ENCODE measurements at regions of chr1 and their contacts with region 1.

Region 1: GRCh38 chr1:12016182-12016581 is 3.1 kb upstream of the MIIP start:
- DNase-seq: no peak
- H3K4me3 ChIP-seq: no peak overlapping the region
- H3K27ac ChIP-seq: no peak overlapping the region
- H3K4me1 ChIP-seq: no peaks in the 10 kb centered on the region
- H3K27me3 ChIP-seq: no peaks in the 10 kb centered on the region
- CTCF ChIP-seq: no peak

Region 2: DNA sequence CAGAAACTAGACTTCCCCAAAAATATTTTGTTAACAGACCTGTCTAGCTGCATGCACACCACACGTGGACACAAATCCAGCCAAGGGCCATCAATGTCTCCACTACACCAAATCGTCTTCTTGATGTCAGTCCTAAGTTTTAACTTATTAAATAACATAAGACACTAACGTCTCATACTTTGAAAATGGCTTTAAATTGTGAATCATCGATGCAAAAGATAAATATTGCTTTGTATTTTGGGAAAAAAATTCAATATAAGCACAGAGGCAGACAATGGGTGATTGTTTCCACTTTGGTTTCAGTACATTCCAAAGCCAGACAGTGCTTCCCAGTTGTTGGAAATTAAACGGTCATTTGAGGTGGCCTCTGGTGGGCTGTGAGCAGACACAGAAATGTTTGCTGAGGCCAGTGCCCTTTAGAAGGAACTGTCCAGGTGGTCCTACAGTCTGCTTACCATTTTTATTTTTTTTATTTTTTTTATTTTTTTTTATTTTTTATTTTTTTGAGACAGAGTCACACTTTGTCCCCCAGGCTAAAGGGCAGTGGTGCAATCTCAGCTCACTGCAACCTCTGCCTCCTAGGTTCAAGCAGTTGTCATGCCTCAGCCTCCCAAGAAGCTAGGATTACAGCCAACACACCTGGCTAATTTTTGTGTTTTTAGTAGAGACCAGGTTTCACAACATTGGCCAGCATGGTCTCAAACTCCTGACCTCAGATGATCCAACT is 88.2 kb before region 1 on chr1:
- CTCF ChIA-PET with region 1: no interaction called
- POLR2A ChIA-PET with region 1: interaction called, 10 read pairs
- intact Hi-C with region 1: no loop called
- DNase-seq: no peak
- H3K4me3 ChIP-seq: no peak overlapping the region
- H3K27ac ChIP-seq: no peak overlapping the region
- H3K4me1 ChIP-seq: peaks cover 27% of the 10 kb centered on the region
- H3K27me3 ChIP-seq: no peaks in the 10 kb centered on the region
- CTCF ChIP-seq: no peak

Region 3: DNA sequence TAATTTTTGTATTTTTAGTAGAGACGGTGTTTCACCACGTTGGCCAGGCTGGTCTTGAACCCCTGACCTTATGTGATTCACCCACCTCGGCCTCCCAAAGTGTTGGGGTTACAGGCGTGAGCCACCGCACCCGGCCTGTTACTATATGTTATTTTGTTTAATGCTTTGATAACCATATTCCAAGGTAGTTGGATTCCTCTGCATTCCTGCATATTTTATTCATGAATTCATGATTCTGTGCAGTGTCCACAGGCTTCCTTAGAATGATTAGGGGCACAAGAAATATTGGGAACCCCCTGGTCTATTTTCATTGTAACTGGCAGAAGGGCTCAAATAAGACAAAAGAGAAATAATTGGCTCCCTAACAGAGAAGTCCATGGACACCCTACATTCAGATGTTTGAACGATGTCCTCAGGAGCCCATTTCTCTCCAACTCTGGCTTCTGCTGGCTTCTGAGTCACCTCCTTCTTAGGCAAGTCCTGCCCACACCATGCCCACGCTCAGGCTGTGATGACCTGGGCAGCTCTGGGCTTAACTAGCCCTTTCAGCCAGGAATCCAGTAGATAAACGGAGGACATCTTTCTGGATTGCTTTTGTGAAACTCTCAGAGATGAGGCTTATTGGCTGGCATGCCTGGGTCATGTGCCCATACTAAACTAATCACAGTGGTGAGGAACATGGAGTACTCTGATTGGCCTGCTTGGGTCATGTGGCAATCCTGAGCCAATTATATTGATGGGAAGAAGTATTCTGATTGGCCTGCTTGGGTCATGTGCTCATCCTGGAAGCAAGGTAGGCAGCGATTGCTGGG is 79.5 kb after region 1 on chr1:
- CTCF ChIA-PET with region 1: no interaction called
- POLR2A ChIA-PET with region 1: no interaction called
- intact Hi-C with region 1: no loop called
- DNase-seq: peak; percentile 40
- H3K4me3 ChIP-seq: no peak overlapping the region
- H3K27ac ChIP-seq: no peak overlapping the region
- H3K4me1 ChIP-seq: no peaks in the 10 kb centered on the region
- H3K27me3 ChIP-seq: no peaks in the 10 kb centered on the region
- CTCF ChIP-seq: no peak